HepG2 (cell line): ENCODE measurements at regions of chr16 and their contacts with region 1.

Region 1: DNA sequence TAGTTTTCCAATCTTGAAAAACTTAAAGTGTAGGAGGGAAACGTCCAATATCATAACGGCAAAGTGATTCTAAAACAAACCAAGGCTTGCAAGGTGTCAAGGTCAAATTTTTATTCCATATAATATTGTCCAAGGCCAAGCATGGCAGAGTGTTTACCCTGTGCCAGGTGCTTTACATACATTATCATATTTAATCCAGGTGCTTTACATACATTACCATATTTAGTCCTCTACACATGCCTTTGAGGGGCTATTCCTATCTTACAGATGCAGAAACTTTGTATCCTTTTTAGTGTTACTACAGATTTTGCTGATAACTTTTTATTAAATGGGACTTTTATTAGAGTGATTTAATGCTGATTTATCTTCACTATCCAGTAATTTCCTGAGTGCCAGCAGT is 23.9 kb downstream of the MAF start:
- DNase-seq: no peak
- ATAC-seq: no peak
- H3K4me3 ChIP-seq: no peak overlapping the region
- H3K27ac ChIP-seq: no peak overlapping the region
- H3K4me1 ChIP-seq: no peaks in the 10 kb centered on the region
- H3K27me3 ChIP-seq: no peaks in the 10 kb centered on the region
- CTCF ChIP-seq: no peak
- EP300 ChIP-seq: no peak
- POLR2A ChIP-seq: no peak
- RAD21 ChIP-seq: no peak

Region 2: DNA sequence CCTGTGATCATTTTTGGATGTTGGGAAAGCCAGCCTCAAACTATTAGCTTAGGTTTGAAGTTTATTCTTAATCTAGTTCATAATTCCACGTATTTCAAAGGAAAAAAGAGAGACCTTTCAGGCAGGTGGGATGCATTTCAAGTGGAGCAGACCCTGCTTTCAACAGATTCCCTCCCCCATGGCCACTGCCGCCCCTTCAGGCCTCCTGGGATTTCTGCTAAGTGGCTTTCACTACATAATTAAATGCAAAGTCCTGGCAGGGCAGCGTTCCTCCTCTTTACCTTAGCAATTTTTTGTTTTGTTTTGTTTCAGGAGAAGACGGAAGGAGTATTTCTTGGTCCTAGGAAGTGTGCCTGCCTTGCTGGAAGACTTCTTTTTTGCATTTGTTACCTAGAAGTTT is 12.7 kb before region 1 on chr16:
- CTCF ChIA-PET with region 1: no interaction called
- POLR2A ChIA-PET with region 1: no interaction called
- in situ Hi-C with region 1: no loop called
- intact Hi-C with region 1: loop called (anchors 1 kb)
- DNase-seq: no peak
- ATAC-seq: no peak
- H3K4me3 ChIP-seq: no peak overlapping the region
- H3K27ac ChIP-seq: no peak overlapping the region
- H3K4me1 ChIP-seq: peaks cover 15% of the 10 kb centered on the region
- H3K27me3 ChIP-seq: no peaks in the 10 kb centered on the region
- CTCF ChIP-seq: no peak
- EP300 ChIP-seq: no peak
- POLR2A ChIP-seq: no peak
- RAD21 ChIP-seq: no peak